CD4-positive, alpha-beta T cell (primary cell): ENCODE measurements at regions of chr11 and their contacts with region 1.

Region 1: GRCh38 chr11:112280268-112281126 is 19.8 kb upstream of the PLET1 start:
- DNase-seq: peak; percentile 38 to 90 (median 56)
- ATAC-seq: peak; percentile 90
- H3K4me3 ChIP-seq: peak overlapping the region; percentile 61
- H3K4me3 Mint-ChIP-seq: peak overlapping the region; percentile 92
- H3K27ac ChIP-seq: no peak overlapping the region
- H3K27ac Mint-ChIP-seq: peak overlapping the region; percentile 64
- H3K4me1 ChIP-seq: peaks cover 22% of the 10 kb centered on the region
- H3K4me1 Mint-ChIP-seq: peaks cover 17% of the 10 kb centered on the region
- H3K27me3 ChIP-seq: no peaks in the 10 kb centered on the region
- H3K27me3 Mint-ChIP-seq: no peaks in the 10 kb centered on the region
- CTCF ChIP-seq: peak; percentile 44

Region 2: DNA sequence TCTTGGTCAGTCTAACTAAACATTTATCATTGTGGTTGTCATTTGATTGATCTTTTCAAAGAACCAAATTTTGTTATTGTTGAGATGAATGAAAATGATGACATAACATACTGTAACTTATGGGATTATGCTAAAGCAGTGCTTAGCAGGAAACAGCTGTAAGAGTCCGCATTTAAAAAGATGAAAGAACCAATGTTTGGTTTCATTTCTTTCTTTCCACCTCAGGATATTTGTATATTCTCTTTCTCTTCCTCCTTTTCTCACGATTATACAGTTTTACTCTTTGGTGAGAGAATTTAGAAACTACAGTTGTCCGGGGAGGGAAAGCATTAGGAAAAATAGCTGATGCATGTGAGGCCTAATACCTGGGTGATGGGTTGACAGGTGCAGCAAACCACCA is 229.8 kb before region 1 on chr11:
- CTCF ChIA-PET with region 1: no interaction called
- POLR2A ChIA-PET with region 1: no interaction called
- intact Hi-C with region 1: no loop called
- DNase-seq: no peak
- ATAC-seq: no peak
- H3K4me3 ChIP-seq: no peak overlapping the region
- H3K4me3 Mint-ChIP-seq: no peak overlapping the region
- H3K27ac ChIP-seq: no peak overlapping the region
- H3K27ac Mint-ChIP-seq: no peak overlapping the region
- H3K4me1 ChIP-seq: no peaks in the 10 kb centered on the region
- H3K4me1 Mint-ChIP-seq: peaks cover 12% of the 10 kb centered on the region
- H3K27me3 ChIP-seq: no peaks in the 10 kb centered on the region
- H3K27me3 Mint-ChIP-seq: no peaks in the 10 kb centered on the region
- CTCF ChIP-seq: no peak

Region 3: GRCh38 chr11:112113539-112114457 is 166.7 kb before region 1 on chr11:
- CTCF ChIA-PET with region 1: interaction called, 3 read pairs
- POLR2A ChIA-PET with region 1: no interaction called
- intact Hi-C with region 1: loop called in 1 of 2 experiments (anchors 2 kb)
- DNase-seq: peak in 4 of 14 experiments; percentile 13 to 68 (median 58)
- ATAC-seq: peak; percentile 57
- H3K4me3 ChIP-seq: no peak overlapping the region
- H3K4me3 Mint-ChIP-seq: no peak overlapping the region
- H3K27ac ChIP-seq: no peak overlapping the region
- H3K27ac Mint-ChIP-seq: no peak overlapping the region
- H3K4me1 ChIP-seq: no peaks in the 10 kb centered on the region
- H3K4me1 Mint-ChIP-seq: no peaks in the 10 kb centered on the region
- H3K27me3 ChIP-seq: no peaks in the 10 kb centered on the region
- H3K27me3 Mint-ChIP-seq: no peaks in the 10 kb centered on the region
- CTCF ChIP-seq: peak; percentile 88

Region 4: GRCh38 chr11:112226062-112226830 is 54.3 kb before region 1 on chr11 and contains the start of gene PTS:
- CTCF ChIA-PET with region 1: interaction called, 49 read pairs
- POLR2A ChIA-PET with region 1: interaction called, 18 read pairs
- intact Hi-C with region 1: no loop called
- DNase-seq: peak; percentile 68 to 93 (median 80)
- ATAC-seq: peak; percentile 89
- H3K4me3 ChIP-seq: peak within 1 kb of the TSS; percentile 69
- H3K4me3 Mint-ChIP-seq: peak within 1 kb of the TSS; percentile 96
- H3K27ac ChIP-seq: peak within 1 kb of the TSS; percentile 95 to 96
- H3K27ac Mint-ChIP-seq: peak within 1 kb of the TSS; percentile 99
- H3K4me1 ChIP-seq: peaks cover 17% of the 10 kb centered on the region
- H3K4me1 Mint-ChIP-seq: peaks cover 20% of the 10 kb centered on the region
- H3K27me3 ChIP-seq: no peaks in the 10 kb centered on the region
- H3K27me3 Mint-ChIP-seq: no peaks in the 10 kb centered on the region
- CTCF ChIP-seq: no peak
- total RNA-seq, gene PTS: 82.9 to 86.2 TPM

Region 5: DNA sequence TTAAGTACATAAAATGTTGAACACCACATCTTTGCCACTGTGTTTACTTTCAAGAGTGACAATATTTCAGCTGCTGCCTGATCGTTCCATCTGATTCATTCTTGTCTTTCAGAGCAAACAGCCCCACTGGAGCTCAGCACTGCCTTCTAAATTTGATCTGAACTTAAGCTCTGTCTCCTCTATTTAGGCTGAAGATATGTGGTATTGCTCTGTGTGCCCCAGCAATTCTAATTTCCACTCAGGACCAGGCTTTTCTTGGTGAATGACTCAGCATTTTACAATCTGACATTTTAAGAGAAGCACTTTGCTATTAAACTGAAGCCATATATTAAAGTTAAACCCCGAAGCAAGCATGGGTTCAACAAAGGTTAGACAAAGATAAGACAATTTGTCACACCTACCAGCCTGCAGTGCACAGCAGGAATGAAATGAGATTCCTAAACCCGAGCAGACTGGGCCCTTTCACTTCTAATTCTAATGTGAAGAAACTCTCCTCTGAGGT is 21.8 kb after region 1 on chr11:
- CTCF ChIA-PET with region 1: no interaction called
- POLR2A ChIA-PET with region 1: no interaction called
- intact Hi-C with region 1: no loop called
- DNase-seq: no peak
- ATAC-seq: no peak
- H3K4me3 ChIP-seq: no peak overlapping the region
- H3K4me3 Mint-ChIP-seq: no peak overlapping the region
- H3K27ac ChIP-seq: no peak overlapping the region
- H3K27ac Mint-ChIP-seq: no peak overlapping the region
- H3K4me1 ChIP-seq: peaks cover 16% of the 10 kb centered on the region
- H3K4me1 Mint-ChIP-seq: peaks cover 28% of the 10 kb centered on the region
- H3K27me3 ChIP-seq: no peaks in the 10 kb centered on the region
- H3K27me3 Mint-ChIP-seq: no peaks in the 10 kb centered on the region
- CTCF ChIP-seq: no peak